ENCODE measurements at regions of chr15 and their contacts with region 1.

Region 1: DNA sequence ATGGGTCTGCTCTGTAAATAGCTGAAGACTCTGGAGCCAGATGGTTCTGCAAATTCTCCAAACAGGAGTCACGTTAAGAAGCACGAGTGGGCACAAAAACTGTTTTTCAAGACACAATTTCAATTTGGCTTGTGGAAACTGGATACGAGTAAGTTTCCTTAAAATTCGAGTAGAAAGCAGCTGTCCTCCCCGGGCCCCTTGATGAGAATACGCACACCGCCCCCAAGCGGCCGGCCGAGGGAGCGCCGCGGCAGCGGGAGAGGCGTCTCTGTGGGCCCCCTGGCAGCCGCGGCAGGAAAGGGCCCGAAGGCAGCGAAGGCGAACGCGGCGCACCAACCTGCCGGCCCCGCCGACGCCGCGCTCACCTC is 778 bp upstream of the THBS1 start:
- DNase-seq: peak; percentile 83 to 92 (median 91)
- H3K4me3 ChIP-seq: peak overlapping the region in 6 of 7 experiments; percentile 35 to 74 (median 60)
- H3K27ac ChIP-seq: no peak overlapping the region
- H3K4me1 ChIP-seq: peaks cover 0 to 22% (median 15%) of the 10 kb centered on the region in 4 experiments
- H3K27me3 ChIP-seq: peaks cover 0 to 17% (median 4%) of the 10 kb centered on the region in 5 experiments

Region 2: DNA sequence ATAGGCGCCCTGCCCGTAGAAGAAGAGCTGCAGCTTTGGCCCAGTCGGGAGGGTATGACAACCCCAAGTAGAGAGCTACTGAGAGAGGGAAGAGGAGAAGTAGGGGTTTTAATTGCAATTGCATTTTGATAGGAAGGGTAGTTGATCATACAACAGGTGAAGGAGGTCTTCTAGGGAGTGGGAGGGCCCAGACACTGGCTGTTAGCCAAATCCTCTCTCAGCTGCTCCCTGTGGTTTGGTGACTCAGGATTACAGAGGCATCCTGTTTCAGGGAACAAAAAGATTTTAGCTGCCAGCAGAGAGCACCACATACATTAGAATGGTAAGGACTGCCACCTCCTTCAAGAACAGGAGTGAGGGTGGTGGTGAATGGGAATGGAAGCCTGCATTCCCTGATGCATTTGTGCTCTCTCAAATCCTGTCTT is 408.1 kb before region 1 on chr15:
- CTCF ChIA-PET with region 1: interaction called, 14 read pairs
- POLR2A ChIA-PET with region 1: no interaction called
- DNase-seq: peak; percentile 83 to 92 (median 89)
- H3K4me3 ChIP-seq: no peak overlapping the region
- H3K27ac ChIP-seq: no peak overlapping the region
- H3K4me1 ChIP-seq: peaks cover 0 to 11% (median 10%) of the 10 kb centered on the region in 4 experiments
- H3K27me3 ChIP-seq: no peaks in the 10 kb centered on the region

Region 3: DNA sequence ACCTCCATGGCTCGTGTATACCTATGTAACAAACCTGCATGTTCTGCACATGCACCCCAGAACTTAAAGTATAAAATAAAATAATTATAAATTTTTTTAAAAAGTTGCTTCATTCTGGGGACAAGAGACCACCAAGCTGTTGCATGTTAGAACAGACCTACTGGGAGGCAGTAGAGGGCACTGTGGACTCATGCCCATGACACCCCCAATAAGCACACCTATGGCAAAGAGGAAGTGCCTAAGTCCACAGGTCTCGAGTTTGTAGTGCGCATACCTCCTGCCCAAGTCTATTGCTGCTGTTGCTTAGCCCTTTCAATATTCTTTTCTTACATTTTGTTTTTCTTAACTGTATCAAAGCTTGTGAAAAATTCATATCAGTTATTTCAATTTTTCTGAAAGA is 267.1 kb before region 1 on chr15:
- CTCF ChIA-PET with region 1: interaction called, 54 read pairs
- POLR2A ChIA-PET with region 1: no interaction called
- DNase-seq: peak; percentile 77 to 91 (median 89)
- H3K4me3 ChIP-seq: no peak overlapping the region
- H3K27ac ChIP-seq: no peak overlapping the region
- H3K4me1 ChIP-seq: peaks cover 0 to 3% (median 0%) of the 10 kb centered on the region in 4 experiments
- H3K27me3 ChIP-seq: no peaks in the 10 kb centered on the region

Measured in common myeloid progenitor, CD34-positive (primary cell).